ENCODE measurements at regions of chr14 and their contacts with region 1.

Region 1: GRCh38 chr14:86057018-86057667 is 527.2 kb downstream of the FLRT2 start:
- DNase-seq: peak; percentile 55
- H3K4me3 Mint-ChIP-seq: no peak overlapping the region
- H3K27ac Mint-ChIP-seq: no peak overlapping the region
- H3K4me1 Mint-ChIP-seq: no peaks in the 10 kb centered on the region
- H3K27me3 Mint-ChIP-seq: no peaks in the 10 kb centered on the region

Region 2: GRCh38 chr14:85634205-85634604 is 422.9 kb before region 1 on chr14:
- CTCF ChIA-PET with region 1: no interaction called
- intact Hi-C with region 1: no loop called
- DNase-seq: no peak
- H3K4me3 Mint-ChIP-seq: no peak overlapping the region
- H3K27ac Mint-ChIP-seq: no peak overlapping the region
- H3K4me1 Mint-ChIP-seq: no peaks in the 10 kb centered on the region
- H3K27me3 Mint-ChIP-seq: no peaks in the 10 kb centered on the region

Region 3: GRCh38 chr14:85728476-85729065 is 328.6 kb before region 1 on chr14:
- CTCF ChIA-PET with region 1: no interaction called
- intact Hi-C with region 1: loop called (anchors 10 kb)
- DNase-seq: no peak
- H3K4me3 Mint-ChIP-seq: no peak overlapping the region
- H3K27ac Mint-ChIP-seq: no peak overlapping the region
- H3K4me1 Mint-ChIP-seq: no peaks in the 10 kb centered on the region
- H3K27me3 Mint-ChIP-seq: no peaks in the 10 kb centered on the region

Region 4: DNA sequence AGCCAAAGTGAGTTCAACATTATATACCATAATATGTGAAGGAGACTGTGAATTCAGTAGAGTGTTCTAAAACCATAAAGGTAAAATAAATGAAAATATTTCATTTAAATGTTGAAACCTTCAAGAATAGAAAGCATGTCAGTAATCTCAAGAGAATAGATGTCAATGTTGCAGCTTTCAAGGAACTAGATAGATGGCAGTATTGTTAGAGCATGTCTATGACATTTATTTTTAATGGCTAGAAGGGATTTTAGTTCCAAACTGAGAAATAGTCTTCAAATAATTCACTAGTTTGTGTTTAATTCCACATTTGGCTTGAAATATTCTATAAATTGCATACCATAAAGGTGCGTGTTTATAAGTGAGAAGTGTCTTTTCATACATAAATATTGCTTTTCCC is 200.7 kb before region 1 on chr14:
- CTCF ChIA-PET with region 1: interaction called, 3 read pairs
- intact Hi-C with region 1: loop called (anchors 1 kb)
- DNase-seq: no peak
- H3K4me3 Mint-ChIP-seq: no peak overlapping the region
- H3K27ac Mint-ChIP-seq: no peak overlapping the region
- H3K4me1 Mint-ChIP-seq: no peaks in the 10 kb centered on the region
- H3K27me3 Mint-ChIP-seq: peaks cover 6% of the 10 kb centered on the region

Measured in activated naive CD4-positive, alpha-beta T cell treated with anti-CD3 and anti-CD28 coated beads for 36 hours (primary cell).